Right lobe of liver (tissue), 6 donors: ENCODE measurements at regions of chr20 and their contacts with region 1.

Region 1: GRCh38 chr20:53926428-53927028 is 143.9 kb downstream of the BCAS1 start:
- DNase-seq: no peak
- ATAC-seq: peak; percentile 65 to 93 (median 76)
- H3K4me3 ChIP-seq: no peak overlapping the region
- H3K27ac ChIP-seq: peak overlapping the region in 2 of 3 donors; percentile 17 to 71
- H3K4me1 ChIP-seq: peaks cover 0 to 8% (median 3%) of the 10 kb centered on the region in 4 donors
- H3K27me3 ChIP-seq: no peaks in the 10 kb centered on the region
- CTCF ChIP-seq: no peak
- POLR2A ChIP-seq: peak; percentile 38

Region 2: GRCh38 chr20:53578492-53579222 is 347.9 kb before region 1 on chr20:
- intact Hi-C with region 1: loop called in 1 of 2 experiments (anchors 10 kb)
- DNase-seq: peak in 1 of 3 donors; percentile 73
- ATAC-seq: peak; percentile 71 to 85 (median 84)
- H3K4me3 ChIP-seq: peak overlapping the region in 1 of 3 donors; percentile 10
- H3K27ac ChIP-seq: peak overlapping the region; percentile 67 to 80 (median 75)
- H3K4me1 ChIP-seq: peaks cover 0 to 54% (median 12%) of the 10 kb centered on the region in 4 donors
- H3K27me3 ChIP-seq: no peaks in the 10 kb centered on the region
- CTCF ChIP-seq: peak; percentile 82 to 99 (median 84)
- POLR2A ChIP-seq: peak; percentile 45